Activated naive CD4-positive, alpha-beta T cell treated with anti-CD3 and anti-CD28 coated beads, Interleukin-2, amount 10 ng/mL, durations not matched to agents 7 days and 5 days (primary cell): ENCODE measurements at regions of chr1 and their contacts with region 1.

Region 1: GRCh38 chr1:156383023-156383422 is 14.0 kb downstream of the RHBG start:
- DNase-seq: peak; percentile 72
- H3K4me3 Mint-ChIP-seq: no peak overlapping the region
- H3K27ac Mint-ChIP-seq: no peak overlapping the region
- H3K4me1 Mint-ChIP-seq: peaks cover 5% of the 10 kb centered on the region
- H3K27me3 Mint-ChIP-seq: peaks cover 66% of the 10 kb centered on the region

Region 2: DNA sequence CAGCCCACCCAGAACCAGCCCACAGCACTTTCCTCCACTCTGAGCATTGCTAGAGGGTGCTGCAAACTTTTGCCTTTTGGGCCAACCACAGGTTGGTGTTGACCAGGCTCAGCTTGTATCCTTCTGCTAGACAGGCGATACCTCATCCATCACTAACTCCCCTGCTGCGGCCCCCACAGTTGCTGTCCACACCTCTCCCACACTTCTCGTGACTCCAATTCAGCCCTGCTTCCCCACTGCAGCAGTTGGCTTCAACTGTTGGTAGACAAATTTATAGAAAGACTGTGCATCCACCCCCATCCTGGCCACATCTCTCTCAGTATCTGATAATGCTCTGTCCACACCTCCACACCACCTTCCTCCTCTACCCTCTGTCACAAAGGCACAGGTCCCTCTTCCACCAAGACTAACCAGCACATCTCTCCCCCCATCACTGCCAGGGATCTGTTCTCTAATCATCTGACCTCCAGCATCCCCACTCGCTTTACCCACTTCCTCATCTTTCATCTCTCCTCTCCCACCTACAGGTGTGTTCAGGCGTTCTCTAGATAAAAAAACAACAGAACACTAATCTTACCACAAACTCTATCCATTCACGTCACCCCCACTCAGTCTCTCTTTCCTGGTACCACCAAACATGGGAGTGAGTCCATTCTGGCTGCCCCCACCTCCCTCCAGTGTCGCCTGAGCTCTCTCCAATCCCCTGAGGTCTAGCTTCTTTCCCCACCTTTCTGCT is 204.9 kb before region 1 on chr1:
- CTCF ChIA-PET with region 1: no interaction called
- DNase-seq: peak; percentile 28
- H3K4me3 Mint-ChIP-seq: no peak overlapping the region
- H3K27ac Mint-ChIP-seq: peak overlapping the region; percentile 17
- H3K4me1 Mint-ChIP-seq: peaks cover 25% of the 10 kb centered on the region
- H3K27me3 Mint-ChIP-seq: peaks cover 27% of the 10 kb centered on the region

Region 3: GRCh38 chr1:156268336-156268735 is 114.7 kb before region 1 on chr1:
- CTCF ChIA-PET with region 1: no interaction called
- DNase-seq: no peak
- H3K4me3 Mint-ChIP-seq: no peak overlapping the region
- H3K27ac Mint-ChIP-seq: no peak overlapping the region
- H3K4me1 Mint-ChIP-seq: no peaks in the 10 kb centered on the region
- H3K27me3 Mint-ChIP-seq: no peaks in the 10 kb centered on the region

Region 4: DNA sequence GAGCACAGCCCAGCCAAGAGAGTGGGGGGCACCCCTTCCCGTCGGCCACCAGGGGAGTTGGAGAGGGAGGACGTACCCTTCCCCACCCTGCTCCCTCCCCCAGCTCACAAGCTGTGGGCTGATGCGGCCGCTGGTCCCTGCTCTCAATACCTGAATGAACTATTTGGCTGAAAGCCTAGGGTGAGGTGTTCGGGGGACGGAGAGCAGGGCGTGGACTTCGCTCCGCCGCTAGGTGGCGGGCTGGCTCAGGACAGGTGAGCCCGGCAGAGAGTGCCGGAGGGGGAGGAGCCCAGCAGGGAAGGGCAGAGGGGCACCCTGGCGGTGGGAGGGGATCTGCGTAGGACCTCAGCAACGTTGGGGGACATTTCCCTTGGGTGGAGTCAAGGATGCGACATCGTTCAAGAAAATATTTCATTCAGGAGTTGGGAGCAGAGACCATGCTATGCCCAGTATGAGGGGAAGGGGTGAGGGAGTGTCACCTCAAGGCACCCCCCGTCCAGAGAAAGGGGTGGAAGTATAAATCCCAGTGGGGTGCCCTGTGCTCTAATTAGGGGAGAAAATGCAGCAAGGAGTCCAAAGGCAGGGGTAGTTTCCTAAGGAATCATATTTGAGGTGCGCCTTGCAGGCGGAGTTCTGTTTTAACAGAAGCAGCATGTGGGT is 26.0 kb before region 1 on chr1:
- CTCF ChIA-PET with region 1: interaction called, 14 read pairs
- DNase-seq: peak; percentile 67
- H3K4me3 Mint-ChIP-seq: no peak overlapping the region
- H3K27ac Mint-ChIP-seq: no peak overlapping the region
- H3K4me1 Mint-ChIP-seq: peaks cover 7% of the 10 kb centered on the region
- H3K27me3 Mint-ChIP-seq: peaks cover 60% of the 10 kb centered on the region

Region 5: DNA sequence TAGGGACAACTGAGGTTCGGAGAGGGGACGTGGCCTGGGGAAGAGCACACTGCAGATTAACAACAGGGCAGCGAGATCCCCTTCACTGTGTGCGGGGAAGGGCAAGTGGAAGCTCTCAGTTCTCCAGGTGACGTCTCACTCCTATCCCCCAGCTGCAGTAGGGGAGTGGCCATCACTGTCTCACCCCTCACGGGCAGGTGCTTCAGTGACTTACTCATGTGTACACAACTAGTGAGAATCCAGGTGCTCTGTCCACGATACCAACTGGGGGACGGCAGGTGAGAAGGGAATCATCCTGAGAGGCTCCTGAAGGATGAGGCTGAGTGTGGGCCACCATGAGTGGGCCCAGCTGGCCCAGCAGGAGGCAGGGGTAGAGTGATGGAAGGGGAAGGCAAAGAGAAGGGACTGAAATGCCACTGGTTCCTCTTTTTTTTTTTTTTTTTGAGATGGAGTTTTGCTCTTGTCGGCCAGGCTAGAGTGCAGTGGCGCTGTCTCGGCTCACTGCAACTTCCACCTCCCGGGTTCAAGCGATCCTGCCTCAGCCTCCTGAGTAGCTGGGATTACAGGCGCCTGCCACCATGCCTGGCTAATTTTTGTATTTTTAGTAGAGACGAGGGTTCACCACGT is 11.9 kb after region 1 on chr1:
- CTCF ChIA-PET with region 1: interaction called, 17 read pairs
- DNase-seq: no peak
- H3K4me3 Mint-ChIP-seq: no peak overlapping the region
- H3K27ac Mint-ChIP-seq: no peak overlapping the region
- H3K4me1 Mint-ChIP-seq: no peaks in the 10 kb centered on the region
- H3K27me3 Mint-ChIP-seq: peaks cover 44% of the 10 kb centered on the region

Region 6: GRCh38 chr1:156414461-156415064 is 31.5 kb after region 1 on chr1:
- CTCF ChIA-PET with region 1: interaction called, 24 read pairs
- DNase-seq: peak; percentile 65
- H3K4me3 Mint-ChIP-seq: no peak overlapping the region
- H3K27ac Mint-ChIP-seq: no peak overlapping the region
- H3K4me1 Mint-ChIP-seq: no peaks in the 10 kb centered on the region
- H3K27me3 Mint-ChIP-seq: peaks cover 92% of the 10 kb centered on the region

Region 7: DNA sequence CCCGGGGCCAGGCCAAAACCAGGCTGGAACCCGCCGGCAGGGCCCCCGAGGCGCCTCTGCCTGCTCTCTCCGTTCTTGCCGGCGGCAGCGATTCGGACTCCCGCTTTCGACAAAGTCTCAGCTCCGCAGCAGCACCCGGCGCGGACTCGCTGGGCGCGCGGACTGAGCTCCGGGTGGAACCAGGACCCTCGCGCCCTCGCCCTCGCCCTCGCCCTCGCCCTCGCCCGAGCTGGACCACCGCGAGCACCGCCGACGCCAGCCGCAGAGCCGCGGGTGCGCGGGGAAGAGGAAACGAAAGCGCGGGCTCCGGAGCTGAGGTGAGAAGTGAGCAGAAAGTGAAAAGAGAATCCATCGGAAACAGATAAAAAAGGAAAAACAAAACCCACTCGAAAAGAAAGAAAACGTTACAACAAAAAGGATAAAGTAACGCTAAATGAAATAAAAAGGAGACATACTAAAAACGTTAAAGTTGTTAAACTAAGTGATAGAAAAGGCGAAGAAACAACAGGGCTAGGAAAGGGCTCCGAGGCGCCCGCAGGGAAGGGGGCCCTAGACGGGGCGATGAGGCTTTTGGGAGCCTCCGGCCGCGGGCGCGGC is 52.6 kb after region 1 on chr1:
- CTCF ChIA-PET with region 1: interaction called, 54 read pairs
- DNase-seq: peak; percentile 50
- H3K4me3 Mint-ChIP-seq: peak overlapping the region; percentile 71
- H3K27ac Mint-ChIP-seq: peak overlapping the region; percentile 56
- H3K4me1 Mint-ChIP-seq: peaks cover 29% of the 10 kb centered on the region
- H3K27me3 Mint-ChIP-seq: peaks cover 100% of the 10 kb centered on the region

Region 8: GRCh38 chr1:156456622-156457465 is 73.8 kb after region 1 on chr1:
- CTCF ChIA-PET with region 1: interaction called, 337 read pairs
- DNase-seq: peak; percentile 97
- H3K4me3 Mint-ChIP-seq: peak overlapping the region; percentile 77
- H3K27ac Mint-ChIP-seq: peak overlapping the region; percentile 97
- H3K4me1 Mint-ChIP-seq: peaks cover 18% of the 10 kb centered on the region
- H3K27me3 Mint-ChIP-seq: peaks cover 9% of the 10 kb centered on the region

Region 9: GRCh38 chr1:156608036-156608674 is 225.1 kb after region 1 on chr1:
- CTCF ChIA-PET with region 1: interaction called, 29 read pairs
- DNase-seq: peak; percentile 78
- H3K4me3 Mint-ChIP-seq: no peak overlapping the region
- H3K27ac Mint-ChIP-seq: no peak overlapping the region
- H3K4me1 Mint-ChIP-seq: peaks cover 12% of the 10 kb centered on the region
- H3K27me3 Mint-ChIP-seq: peaks cover 47% of the 10 kb centered on the region

Region 10: DNA sequence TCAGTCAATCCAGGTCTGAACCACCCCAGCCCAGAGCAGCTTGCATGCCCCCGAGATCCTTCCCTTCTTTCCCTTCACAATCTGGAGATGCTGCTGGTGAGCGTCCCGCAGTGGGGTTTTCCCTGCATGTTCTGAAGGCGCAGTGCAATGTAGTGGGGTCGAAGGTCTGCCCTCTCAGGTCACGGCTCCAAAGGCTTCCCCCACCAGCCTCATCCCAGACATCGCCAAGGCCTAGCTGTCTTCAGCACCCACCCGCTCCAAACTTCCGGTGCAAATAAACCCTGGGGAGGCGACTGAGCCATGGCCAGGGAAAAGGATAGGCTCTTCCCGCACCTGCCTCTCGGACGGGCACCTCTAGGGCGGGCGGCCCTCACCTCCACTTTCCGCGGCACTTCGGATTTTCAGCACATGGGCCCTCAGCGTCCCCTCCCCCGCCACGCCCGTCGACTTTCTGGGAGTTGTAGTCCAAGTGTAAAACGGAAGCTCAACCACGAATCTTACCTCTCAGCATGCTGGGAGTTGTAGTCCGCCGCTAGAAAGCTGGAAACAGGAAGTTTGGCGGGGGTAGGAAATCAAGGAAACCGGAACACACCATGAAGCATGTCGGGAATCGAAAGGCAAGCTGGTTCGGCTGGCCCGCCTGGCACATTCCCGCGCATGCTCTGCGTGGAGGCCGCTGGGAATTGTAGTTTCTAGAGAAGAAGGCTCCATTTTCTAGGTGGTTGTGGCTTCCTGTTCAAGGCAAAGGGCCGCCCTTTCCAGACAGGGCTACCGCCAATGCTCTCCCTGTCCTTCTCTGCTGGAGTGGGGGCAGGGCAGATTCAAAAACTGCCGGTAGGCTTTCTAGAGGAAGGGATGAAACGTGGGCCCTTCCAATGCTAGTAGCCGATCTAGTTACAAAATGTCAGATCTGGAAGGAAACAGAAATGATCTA is 357.9 kb after region 1 on chr1 and contains the start of gene MRPL24:
- CTCF ChIA-PET with region 1: no interaction called
- DNase-seq: peak; percentile 98
- H3K4me3 Mint-ChIP-seq: peak within 1 kb of the TSS; percentile 97
- H3K27ac Mint-ChIP-seq: peak within 1 kb of the TSS; percentile 97
- H3K4me1 Mint-ChIP-seq: peaks cover 61% of the 10 kb centered on the region
- H3K27me3 Mint-ChIP-seq: no peaks in the 10 kb centered on the region